Prostate gland (tissue), 2 donors: ENCODE measurements at regions of chr1 and their contacts with region 1.

Region 1: GRCh38 chr1:177780096-177780700 is 189.7 kb downstream of the SEC16B start:
- DNase-seq: peak; percentile 12
- H3K4me3 ChIP-seq: no peak overlapping the region
- H3K27ac ChIP-seq: no peak overlapping the region
- H3K4me1 ChIP-seq: no peaks in the 10 kb centered on the region
- H3K27me3 ChIP-seq: no peaks in the 10 kb centered on the region
- CTCF ChIP-seq: peak in 3 of 4 experiments; percentile 44 to 65 (median 61)
- POLR2A ChIP-seq: no peak

Region 2: DNA sequence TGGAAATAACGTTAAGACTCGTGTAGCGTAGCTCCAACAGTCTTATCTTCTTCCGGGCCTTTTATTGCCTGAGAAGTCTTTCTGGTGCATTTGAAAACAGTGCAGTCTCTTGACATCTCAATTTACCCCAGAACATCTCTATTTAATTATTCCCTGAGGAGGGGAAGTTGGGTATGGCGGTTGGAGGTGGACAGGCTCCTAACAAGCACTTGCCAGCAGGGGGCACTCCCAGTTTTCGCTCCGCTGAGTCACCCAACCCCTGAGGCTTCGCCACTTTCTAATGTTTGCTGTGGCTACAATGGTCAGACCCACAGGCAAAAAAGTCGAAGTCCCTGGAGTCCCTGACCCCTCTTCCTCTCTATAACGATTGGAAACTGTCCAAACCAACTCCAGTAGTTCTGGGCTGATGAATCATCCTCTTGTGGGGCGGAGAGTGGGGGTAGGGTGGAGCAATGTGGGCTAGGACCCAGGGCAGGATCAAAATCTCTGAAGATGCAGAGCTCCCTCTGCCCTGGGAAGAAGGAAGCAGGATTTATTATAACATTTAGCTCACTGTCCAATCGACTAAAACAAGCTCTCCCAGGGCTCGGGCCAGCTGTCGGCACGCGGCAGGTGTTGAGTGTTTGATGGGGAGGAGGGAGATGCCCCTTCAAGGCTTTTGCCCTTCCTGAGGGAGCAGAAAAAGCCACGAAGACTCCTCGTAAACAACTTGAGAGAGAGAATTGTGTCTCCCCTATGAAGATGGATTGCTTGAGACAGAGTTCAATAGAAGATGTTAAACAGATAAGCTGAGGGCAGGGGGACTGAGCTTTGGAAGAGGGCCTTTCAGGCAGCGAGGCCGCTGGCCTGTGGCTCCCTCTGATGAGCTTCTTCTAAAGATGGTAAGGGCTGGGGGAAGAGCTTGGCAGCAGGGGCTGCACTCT is 523.8 kb before region 1 on chr1:
- intact Hi-C with region 1: loop called (anchors 2 kb)
- DNase-seq: peak; percentile 32
- H3K4me3 ChIP-seq: no peak overlapping the region
- H3K27ac ChIP-seq: no peak overlapping the region
- H3K4me1 ChIP-seq: no peaks in the 10 kb centered on the region
- H3K27me3 ChIP-seq: no peaks in the 10 kb centered on the region
- CTCF ChIP-seq: peak; percentile 11 to 62 (median 56)
- POLR2A ChIP-seq: no peak

Region 3: GRCh38 chr1:177650947-177651346 is 129.3 kb before region 1 on chr1:
- intact Hi-C with region 1: loop called (anchors 10 kb)
- DNase-seq: peak; percentile 29
- H3K4me3 ChIP-seq: no peak overlapping the region
- H3K27ac ChIP-seq: no peak overlapping the region
- H3K4me1 ChIP-seq: peaks cover 3% of the 10 kb centered on the region
- H3K27me3 ChIP-seq: no peaks in the 10 kb centered on the region
- CTCF ChIP-seq: no peak
- POLR2A ChIP-seq: no peak